CD4-positive, alpha-beta T cell (primary cell): ENCODE measurements at regions of chr17 and their contacts with region 1.

Region 1: GRCh38 chr17:67689534-67690177 is 28.1 kb upstream of the NOL11 start:
- DNase-seq: peak in 10 of 14 experiments; percentile 10 to 77 (median 32)
- ATAC-seq: peak; percentile 67
- H3K4me3 ChIP-seq: no peak overlapping the region
- H3K4me3 Mint-ChIP-seq: no peak overlapping the region
- H3K27ac ChIP-seq: no peak overlapping the region
- H3K27ac Mint-ChIP-seq: no peak overlapping the region
- H3K4me1 ChIP-seq: no peaks in the 10 kb centered on the region
- H3K4me1 Mint-ChIP-seq: peaks cover 6% of the 10 kb centered on the region
- H3K27me3 ChIP-seq: no peaks in the 10 kb centered on the region
- H3K27me3 Mint-ChIP-seq: no peaks in the 10 kb centered on the region
- CTCF ChIP-seq: peak; percentile 84

Region 2: DNA sequence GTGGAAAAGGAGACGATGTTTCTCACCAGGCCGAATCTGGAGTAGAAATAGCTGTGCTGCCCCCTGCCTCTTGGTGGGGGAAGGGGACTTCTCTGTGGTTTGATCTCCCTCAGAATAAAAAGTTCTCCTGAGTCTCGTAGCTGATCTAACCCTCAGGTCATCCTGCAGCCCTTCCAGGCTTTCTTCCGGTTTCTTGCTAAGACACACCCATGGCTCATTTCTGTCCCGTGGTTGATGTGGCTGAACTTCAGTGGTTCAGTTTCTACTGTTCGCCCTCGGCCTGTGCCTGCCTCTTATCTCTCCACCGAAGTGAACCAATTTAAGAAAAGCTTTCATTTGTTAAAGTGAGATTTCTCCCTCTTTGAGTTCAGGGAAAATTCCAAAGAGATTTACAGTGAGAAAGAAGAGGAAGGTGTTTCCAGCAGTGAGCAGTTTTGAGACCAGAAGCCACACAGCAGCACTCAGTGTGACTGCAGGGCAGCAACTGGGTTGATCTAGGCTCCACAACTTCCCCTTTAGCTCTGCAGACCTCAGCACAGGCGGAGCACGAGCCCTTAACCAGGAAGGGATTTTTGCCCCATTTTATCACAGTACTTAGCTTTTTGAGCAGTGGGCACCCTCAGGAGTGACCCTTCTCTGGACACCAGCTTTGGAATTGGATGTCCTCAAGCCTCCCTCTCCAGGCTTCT is 889.7 kb before region 1 on chr17:
- CTCF ChIA-PET with region 1: no interaction called
- POLR2A ChIA-PET with region 1: no interaction called
- intact Hi-C with region 1: no loop called
- DNase-seq: no peak
- ATAC-seq: no peak
- H3K4me3 ChIP-seq: no peak overlapping the region
- H3K4me3 Mint-ChIP-seq: no peak overlapping the region
- H3K27ac ChIP-seq: no peak overlapping the region
- H3K27ac Mint-ChIP-seq: no peak overlapping the region
- H3K4me1 ChIP-seq: no peaks in the 10 kb centered on the region
- H3K4me1 Mint-ChIP-seq: no peaks in the 10 kb centered on the region
- H3K27me3 ChIP-seq: no peaks in the 10 kb centered on the region
- H3K27me3 Mint-ChIP-seq: no peaks in the 10 kb centered on the region
- CTCF ChIP-seq: no peak

Region 3: DNA sequence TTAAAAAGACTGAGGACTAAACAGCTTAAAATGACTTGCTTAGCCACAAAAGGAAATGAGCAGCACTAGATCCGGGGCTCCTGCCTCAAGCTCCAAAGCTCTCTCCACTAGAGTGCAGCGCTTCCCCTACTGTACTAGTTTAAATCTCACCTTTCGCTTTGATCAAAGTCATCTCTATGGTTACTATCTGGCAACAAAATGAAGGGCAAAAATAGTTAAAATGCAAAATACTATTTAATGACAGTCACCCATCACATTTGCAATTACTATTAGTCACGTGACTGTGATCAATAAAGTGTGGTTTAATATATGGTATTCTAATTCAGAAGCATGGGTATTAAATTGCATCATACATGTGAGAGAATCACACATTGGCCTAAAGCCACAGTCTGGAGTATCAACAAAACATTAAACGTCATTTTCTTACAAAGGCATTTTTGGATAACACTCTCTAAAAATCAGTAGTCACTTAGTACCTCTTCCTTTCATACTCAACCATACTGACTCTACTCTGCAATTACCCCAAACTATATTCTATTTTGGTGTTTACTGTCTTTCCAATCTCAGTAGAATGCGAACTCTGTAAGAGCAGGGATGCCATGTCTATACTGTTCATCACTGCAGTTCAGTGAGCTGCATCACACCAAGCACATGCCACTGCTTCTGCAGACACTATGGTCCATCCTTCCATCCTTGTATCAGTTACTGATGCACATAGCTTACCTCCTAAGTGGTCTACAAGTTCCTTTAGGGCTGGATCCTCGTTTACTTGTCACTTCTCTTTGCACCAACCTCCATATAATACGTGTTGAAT is 329.5 kb before region 1 on chr17:
- CTCF ChIA-PET with region 1: interaction called, 3 read pairs
- POLR2A ChIA-PET with region 1: no interaction called
- intact Hi-C with region 1: loop called in 1 of 2 experiments (anchors 1 kb)
- DNase-seq: peak in 10 of 14 experiments; percentile 34 to 84 (median 58)
- ATAC-seq: peak; percentile 96
- H3K4me3 ChIP-seq: no peak overlapping the region
- H3K4me3 Mint-ChIP-seq: peak overlapping the region; percentile 17
- H3K27ac ChIP-seq: peak overlapping the region in 1 of 2 donors; percentile 37
- H3K27ac Mint-ChIP-seq: peak overlapping the region; percentile 73
- H3K4me1 ChIP-seq: peaks cover 48% of the 10 kb centered on the region
- H3K4me1 Mint-ChIP-seq: peaks cover 55% of the 10 kb centered on the region
- H3K27me3 ChIP-seq: no peaks in the 10 kb centered on the region
- H3K27me3 Mint-ChIP-seq: no peaks in the 10 kb centered on the region
- CTCF ChIP-seq: peak; percentile 56

Region 4: GRCh38 chr17:67491009-67491680 is 198.5 kb before region 1 on chr17:
- CTCF ChIA-PET with region 1: no interaction called
- POLR2A ChIA-PET with region 1: no interaction called
- intact Hi-C with region 1: loop called in 1 of 2 experiments (anchors 5 kb)
- DNase-seq: peak in 2 of 14 experiments; percentile 33 to 48
- ATAC-seq: no peak
- H3K4me3 ChIP-seq: no peak overlapping the region
- H3K4me3 Mint-ChIP-seq: no peak overlapping the region
- H3K27ac ChIP-seq: no peak overlapping the region
- H3K27ac Mint-ChIP-seq: peak overlapping the region; percentile 49
- H3K4me1 ChIP-seq: peaks cover 36% of the 10 kb centered on the region
- H3K4me1 Mint-ChIP-seq: peaks cover 77% of the 10 kb centered on the region
- H3K27me3 ChIP-seq: no peaks in the 10 kb centered on the region
- H3K27me3 Mint-ChIP-seq: no peaks in the 10 kb centered on the region
- CTCF ChIP-seq: no peak

Region 5: DNA sequence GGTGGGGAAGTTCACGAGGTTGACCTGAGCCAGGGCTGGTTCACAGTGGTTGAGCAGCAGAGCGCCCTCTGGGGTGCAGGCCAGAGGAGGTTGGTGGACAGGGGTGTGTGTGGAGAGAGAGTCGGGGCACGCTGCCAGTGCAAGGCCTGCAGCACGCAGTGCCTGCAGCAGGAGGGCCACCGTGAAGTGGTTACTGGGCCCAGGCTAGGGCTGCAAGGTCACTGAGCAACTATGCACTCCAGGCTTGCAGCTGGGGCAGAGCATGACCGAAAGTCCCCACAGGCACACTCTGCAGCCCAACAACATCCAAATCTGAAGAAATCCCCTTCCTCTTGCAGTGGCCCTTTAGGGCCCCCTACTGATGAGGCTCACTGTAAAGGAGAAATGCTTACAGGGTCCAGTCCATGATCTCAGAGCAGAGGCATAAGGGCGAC is 61.1 kb before region 1 on chr17:
- CTCF ChIA-PET with region 1: no interaction called
- POLR2A ChIA-PET with region 1: no interaction called
- intact Hi-C with region 1: no loop called
- DNase-seq: peak in 3 of 14 experiments; percentile 10 to 28 (median 11)
- ATAC-seq: no peak
- H3K4me3 ChIP-seq: no peak overlapping the region
- H3K4me3 Mint-ChIP-seq: no peak overlapping the region
- H3K27ac ChIP-seq: no peak overlapping the region
- H3K27ac Mint-ChIP-seq: peak overlapping the region; percentile 4
- H3K4me1 ChIP-seq: no peaks in the 10 kb centered on the region
- H3K4me1 Mint-ChIP-seq: peaks cover 9% of the 10 kb centered on the region
- H3K27me3 ChIP-seq: no peaks in the 10 kb centered on the region
- H3K27me3 Mint-ChIP-seq: no peaks in the 10 kb centered on the region
- CTCF ChIP-seq: no peak

Region 6: GRCh38 chr17:67647482-67647881 is 42.2 kb before region 1 on chr17:
- CTCF ChIA-PET with region 1: no interaction called
- POLR2A ChIA-PET with region 1: no interaction called
- intact Hi-C with region 1: no loop called
- DNase-seq: no peak
- ATAC-seq: no peak
- H3K4me3 ChIP-seq: no peak overlapping the region
- H3K4me3 Mint-ChIP-seq: no peak overlapping the region
- H3K27ac ChIP-seq: no peak overlapping the region
- H3K27ac Mint-ChIP-seq: no peak overlapping the region
- H3K4me1 ChIP-seq: peaks cover 2% of the 10 kb centered on the region
- H3K4me1 Mint-ChIP-seq: peaks cover 4% of the 10 kb centered on the region
- H3K27me3 ChIP-seq: no peaks in the 10 kb centered on the region
- H3K27me3 Mint-ChIP-seq: no peaks in the 10 kb centered on the region
- CTCF ChIP-seq: no peak